Transverse colon (tissue), 4 donors: ENCODE measurements at regions of chr12 and their contacts with region 1.

Region 1: GRCh38 chr12:70590051-70590450 is 47.2 kb downstream of the PTPRB start:
- DNase-seq: peak; percentile 69
- H3K4me3 ChIP-seq: no peak overlapping the region
- H3K27ac ChIP-seq: no peak overlapping the region
- H3K4me1 ChIP-seq: no peaks in the 10 kb centered on the region
- H3K27me3 ChIP-seq: no peaks in the 10 kb centered on the region
- CTCF ChIP-seq: peak; percentile 65 to 80 (median 74)
- EP300 ChIP-seq: no peak
- POLR2A ChIP-seq: no peak

Region 2: GRCh38 chr12:70660620-70661219 is 70.7 kb after region 1 on chr12:
- in situ Hi-C with region 1: no loop called
- intact Hi-C with region 1: no loop called
- DNase-seq: no peak
- H3K4me3 ChIP-seq: no peak overlapping the region
- H3K27ac ChIP-seq: no peak overlapping the region
- H3K4me1 ChIP-seq: no peaks in the 10 kb centered on the region
- H3K27me3 ChIP-seq: no peaks in the 10 kb centered on the region
- CTCF ChIP-seq: no peak
- EP300 ChIP-seq: no peak
- POLR2A ChIP-seq: no peak

Region 3: DNA sequence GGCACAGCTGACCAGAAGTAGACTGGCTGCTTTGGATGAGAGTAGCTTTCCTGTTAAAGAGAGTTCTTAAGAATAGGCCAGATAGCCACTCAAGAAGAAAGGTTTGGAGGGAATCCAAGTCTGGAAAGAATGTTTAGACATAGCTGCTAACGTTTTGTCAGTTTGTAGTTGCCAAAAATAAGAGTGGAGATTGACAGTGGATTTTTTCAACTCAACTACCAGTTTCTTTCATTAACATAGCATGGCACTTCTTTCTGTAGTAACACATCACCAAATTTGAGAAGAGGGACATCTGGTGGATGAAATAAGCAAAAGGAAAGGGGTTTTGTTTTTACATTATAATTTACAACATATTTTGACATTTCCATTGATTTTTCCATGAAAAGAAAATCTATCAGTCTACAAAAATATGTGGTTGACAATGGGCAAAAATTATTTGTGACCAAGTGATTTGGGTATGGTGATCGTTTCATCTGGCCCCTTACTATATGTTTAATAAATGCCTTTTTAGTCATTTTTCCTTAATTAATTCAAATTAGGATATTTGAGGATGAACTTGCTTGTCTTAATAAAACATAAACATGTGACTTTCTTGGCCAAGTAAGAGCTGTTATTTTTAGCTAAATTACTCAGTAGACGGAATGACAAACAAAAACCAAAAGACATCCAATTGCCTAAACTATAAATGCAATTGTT is 259.4 kb after region 1 on chr12:
- in situ Hi-C with region 1: loop called in 1 of 4 experiments (anchors 25 kb)
- intact Hi-C with region 1: no loop called
- DNase-seq: no peak
- H3K4me3 ChIP-seq: no peak overlapping the region
- H3K27ac ChIP-seq: no peak overlapping the region
- H3K4me1 ChIP-seq: peaks cover 0 to 6% (median 0%) of the 10 kb centered on the region in 4 donors
- H3K27me3 ChIP-seq: no peaks in the 10 kb centered on the region
- CTCF ChIP-seq: peak; percentile 18 to 60 (median 40)
- EP300 ChIP-seq: no peak
- POLR2A ChIP-seq: no peak